ENCODE measurements at regions of chr11 and their contacts with region 1.

Region 1: DNA sequence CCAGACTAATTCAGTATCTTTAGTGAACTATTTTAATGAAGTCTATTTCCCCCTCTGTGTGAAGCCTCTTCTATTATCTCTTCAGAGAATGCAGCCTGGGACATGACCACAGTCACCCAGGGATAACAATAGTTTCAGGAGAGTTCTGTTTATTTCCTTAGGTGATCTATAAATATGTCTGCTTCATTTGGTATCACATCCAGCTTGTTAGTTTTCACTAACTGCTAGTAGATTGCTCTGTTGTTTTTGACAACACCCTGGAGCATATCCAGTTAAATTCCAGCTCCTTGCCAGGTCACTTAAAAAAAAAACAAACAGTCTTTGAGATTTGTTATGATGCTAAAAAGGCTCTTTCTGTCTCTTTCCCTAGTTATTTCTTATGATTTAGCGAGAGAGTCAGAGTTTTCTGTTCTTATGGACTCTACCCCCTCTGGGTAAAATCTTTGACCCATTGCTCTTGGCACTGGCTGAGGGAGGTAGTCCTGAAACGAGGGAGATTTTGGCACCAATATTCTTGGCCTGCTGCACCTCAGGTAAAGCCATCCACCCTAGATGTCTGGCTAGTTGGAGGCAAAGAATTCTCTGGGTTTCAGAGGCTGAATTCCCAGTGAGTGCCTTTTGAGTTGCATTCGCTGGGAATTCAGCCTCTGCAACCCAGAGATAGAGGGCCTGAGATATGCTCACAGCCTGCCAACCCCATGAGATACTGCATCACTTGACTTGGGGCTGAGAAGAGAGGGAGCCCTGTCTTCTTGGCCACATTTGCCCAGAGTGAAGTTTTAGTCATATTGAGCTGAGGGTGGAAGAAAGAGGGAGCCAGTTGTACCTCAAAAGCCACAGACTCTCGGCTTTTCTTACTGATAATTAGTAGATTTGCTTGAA is 159.1 kb downstream of the PGR start:
- DNase-seq: peak in 1 of 2 donors; percentile 4
- ATAC-seq: peak in 7 of 8 donors; percentile 12 to 89 (median 75)
- H3K4me3 ChIP-seq: no peak overlapping the region
- H3K27ac ChIP-seq: peak overlapping the region in 6 of 10 donors; percentile 22 to 68 (median 58)
- H3K4me1 ChIP-seq: peaks cover 0 to 16% (median 9%) of the 10 kb centered on the region in 9 donors
- H3K27me3 ChIP-seq: no peaks in the 10 kb centered on the region
- CTCF ChIP-seq: no peak

Region 2: DNA sequence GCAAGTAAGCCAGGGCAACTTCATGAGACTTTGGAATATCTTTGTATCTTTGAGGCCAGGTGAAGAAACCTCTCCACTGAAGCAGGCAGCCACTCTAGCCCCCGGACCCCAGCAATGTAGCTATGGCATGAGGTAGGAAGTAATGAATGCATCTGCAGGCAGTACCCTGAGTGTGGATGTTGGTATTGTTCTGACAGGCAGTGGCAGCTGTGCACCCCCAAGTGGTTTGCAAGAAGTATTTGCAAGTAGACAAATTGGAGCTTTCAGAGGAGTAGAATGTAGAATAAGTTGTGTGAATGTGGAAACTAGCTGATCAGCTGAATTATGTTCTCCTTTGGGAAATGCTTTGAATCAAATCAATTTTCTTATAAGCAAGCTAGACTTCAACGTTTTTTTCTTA is 353.5 kb after region 1 on chr11:
- intact Hi-C with region 1: loop called in 2 of 10 experiments (anchors 10 kb)
- DNase-seq: no peak
- ATAC-seq: peak in 1 of 8 donors; percentile 55
- H3K4me3 ChIP-seq: no peak overlapping the region
- H3K27ac ChIP-seq: no peak overlapping the region
- H3K4me1 ChIP-seq: no peaks in the 10 kb centered on the region
- H3K27me3 ChIP-seq: no peaks in the 10 kb centered on the region
- CTCF ChIP-seq: peak in 7 of 9 donors; percentile 18 to 55 (median 39)